ENCODE measurements at regions of chr12 and their contacts with region 1.

Region 1: GRCh38 chr12:66203820-66204219 is 14.8 kb downstream of the IRAK3 start:
- DNase-seq: no peak
- ATAC-seq: no peak
- H3K4me3 ChIP-seq: no peak overlapping the region
- H3K27ac ChIP-seq: no peak overlapping the region
- H3K4me1 ChIP-seq: peaks cover 0 to 5% (median 0%) of the 10 kb centered on the region in 9 donors
- H3K27me3 ChIP-seq: no peaks in the 10 kb centered on the region
- CTCF ChIP-seq: no peak

Region 2: GRCh38 chr12:66217342-66217917 is 13.6 kb after region 1 on chr12:
- intact Hi-C with region 1: loop called in 1 of 10 experiments (anchors 1 kb)
- DNase-seq: no peak
- ATAC-seq: peak in 1 of 8 donors; percentile 27
- H3K4me3 ChIP-seq: no peak overlapping the region
- H3K27ac ChIP-seq: peak overlapping the region in 1 of 10 donors; percentile 54
- H3K4me1 ChIP-seq: peaks cover 0 to 11% (median 0%) of the 10 kb centered on the region in 9 donors
- H3K27me3 ChIP-seq: no peaks in the 10 kb centered on the region
- CTCF ChIP-seq: no peak

Region 3: GRCh38 chr12:66269757-66270383 is 66.0 kb after region 1 on chr12:
- intact Hi-C with region 1: no loop called
- DNase-seq: no peak
- ATAC-seq: peak in 2 of 8 donors; percentile 30 to 58
- H3K4me3 ChIP-seq: no peak overlapping the region
- H3K27ac ChIP-seq: peak overlapping the region in 1 of 10 donors; percentile 82
- H3K4me1 ChIP-seq: peaks cover 0 to 34% (median 0%) of the 10 kb centered on the region in 9 donors
- H3K27me3 ChIP-seq: peaks cover 0 to 7% (median 0%) of the 10 kb centered on the region in 7 donors
- CTCF ChIP-seq: peak; percentile 17 to 71 (median 59)

Measured in heart right ventricle (tissue), 16 donors.